ENCODE measurements at regions of chrX and their contacts with region 1.

Region 1: DNA sequence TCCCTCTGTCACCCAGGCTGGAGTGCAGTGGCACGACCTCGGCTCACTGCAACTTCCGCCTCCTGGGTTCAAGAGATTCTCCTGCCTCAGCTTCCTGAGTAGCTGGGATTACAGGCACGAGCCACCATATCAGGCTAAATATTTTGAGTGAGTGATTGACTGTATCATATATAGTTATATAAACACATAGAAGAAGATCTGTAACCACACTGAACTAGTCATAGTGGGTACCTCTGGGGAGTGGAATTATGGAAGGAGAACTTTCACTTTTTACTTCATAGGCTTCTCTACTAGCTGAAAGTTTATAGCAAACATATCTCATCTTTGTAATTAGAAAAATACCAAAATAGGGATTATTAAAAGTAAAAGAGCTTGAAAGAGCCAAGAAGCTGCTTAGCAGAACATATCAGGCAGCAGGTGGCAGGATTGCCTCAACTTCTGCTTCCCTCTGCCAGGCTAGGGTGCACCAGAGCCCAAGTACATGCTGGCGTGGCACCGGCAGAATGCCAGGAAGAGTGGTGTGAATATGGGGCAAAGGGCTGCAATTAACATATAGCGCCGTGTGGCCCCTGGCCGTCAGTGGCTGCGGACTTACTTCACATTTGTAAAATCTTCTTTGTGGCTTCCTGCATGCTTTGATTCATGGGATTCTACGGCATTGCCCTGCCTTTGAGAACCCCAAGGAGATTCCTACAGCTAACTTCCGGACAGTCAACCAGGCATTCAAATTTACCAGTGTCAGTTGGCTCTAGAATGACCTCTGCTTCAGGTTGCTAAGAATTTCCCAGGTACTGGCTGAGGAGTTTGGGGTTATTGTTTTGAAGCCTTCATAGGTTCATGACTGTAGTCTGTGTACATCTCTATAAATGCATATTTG is 39.4 kb upstream of the CD40LG start:
- DNase-seq: peak; percentile 2
- H3K4me3 ChIP-seq: no peak overlapping the region
- H3K27ac ChIP-seq: no peak overlapping the region
- H3K4me1 ChIP-seq: no peaks in the 10 kb centered on the region
- H3K27me3 ChIP-seq: no peaks in the 10 kb centered on the region
- CTCF ChIP-seq: no peak
- POLR2A ChIP-seq: no peak

Region 2: DNA sequence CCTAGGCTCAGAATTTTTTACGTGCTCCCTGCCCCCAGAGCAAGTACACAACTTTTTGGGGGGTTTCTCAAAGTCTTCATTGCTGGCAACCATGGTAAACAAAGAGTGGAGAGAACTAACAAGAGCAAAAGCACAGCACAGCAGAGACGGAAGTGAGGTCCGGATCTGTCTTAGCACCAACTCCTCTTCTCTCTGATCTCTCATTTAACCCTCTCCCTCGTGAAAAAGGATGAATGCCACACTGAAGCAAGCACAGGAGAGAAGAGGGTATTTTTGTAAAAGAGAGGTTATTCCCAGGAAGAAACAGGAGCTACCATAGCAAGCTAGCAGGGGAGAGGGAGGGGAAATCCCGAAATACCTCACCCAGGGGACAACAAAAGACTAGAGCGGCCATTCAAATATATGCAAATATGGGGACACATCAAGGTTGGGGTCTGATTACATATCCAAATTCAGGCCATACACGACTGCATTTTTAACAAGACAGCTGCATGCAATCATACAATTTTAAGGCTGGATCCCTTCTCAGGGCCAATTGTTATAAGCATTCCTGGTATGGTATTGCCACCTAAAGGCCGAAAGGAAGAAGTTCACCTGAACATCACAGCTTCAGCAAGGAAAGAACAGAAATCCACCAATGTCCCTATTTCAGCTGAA is 86.0 kb after region 1 on chrX:
- CTCF ChIA-PET with region 1: interaction called, 17 read pairs
- POLR2A ChIA-PET with region 1: no interaction called
- dilution Hi-C with region 1: no loop called
- intact Hi-C with region 1: loop called (anchors 5 kb)
- DNase-seq: peak; percentile 19
- H3K4me3 ChIP-seq: no peak overlapping the region
- H3K27ac ChIP-seq: no peak overlapping the region
- H3K4me1 ChIP-seq: no peaks in the 10 kb centered on the region
- H3K27me3 ChIP-seq: no peaks in the 10 kb centered on the region
- CTCF ChIP-seq: peak; percentile 32 to 33
- POLR2A ChIP-seq: no peak

Region 3: GRCh38 chrX:136735601-136736000 is 127.1 kb after region 1 on chrX:
- CTCF ChIA-PET with region 1: no interaction called
- POLR2A ChIA-PET with region 1: no interaction called
- dilution Hi-C with region 1: no loop called
- intact Hi-C with region 1: no loop called
- DNase-seq: no peak
- H3K4me3 ChIP-seq: no peak overlapping the region
- H3K27ac ChIP-seq: no peak overlapping the region
- H3K4me1 ChIP-seq: no peaks in the 10 kb centered on the region
- H3K27me3 ChIP-seq: no peaks in the 10 kb centered on the region
- CTCF ChIP-seq: no peak
- POLR2A ChIP-seq: no peak

Region 4: DNA sequence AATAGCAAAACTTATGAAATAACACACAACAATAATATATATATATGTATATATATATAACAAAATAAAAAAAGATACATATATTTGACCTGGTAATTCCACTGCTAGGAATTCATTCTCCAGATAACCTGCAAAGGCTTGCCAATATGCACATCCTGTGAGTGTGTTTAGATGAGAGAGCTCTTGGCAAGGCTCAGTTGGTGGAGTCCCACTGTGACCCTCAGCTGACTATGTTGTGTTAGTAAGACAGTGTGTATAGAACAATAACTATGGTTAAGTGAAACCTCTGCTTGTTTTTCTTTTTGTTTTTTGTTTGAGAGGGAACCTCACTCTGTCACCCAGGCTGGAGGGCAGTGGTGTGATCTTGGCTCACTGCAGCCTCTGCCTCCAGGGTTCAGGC is 311.5 kb after region 1 on chrX:
- CTCF ChIA-PET with region 1: no interaction called
- POLR2A ChIA-PET with region 1: no interaction called
- dilution Hi-C with region 1: no loop called
- intact Hi-C with region 1: loop called (anchors 1 kb)
- DNase-seq: peak; percentile 50
- H3K4me3 ChIP-seq: no peak overlapping the region
- H3K27ac ChIP-seq: no peak overlapping the region
- H3K4me1 ChIP-seq: no peaks in the 10 kb centered on the region
- H3K27me3 ChIP-seq: no peaks in the 10 kb centered on the region
- CTCF ChIP-seq: no peak
- POLR2A ChIP-seq: no peak

Measured in endothelial cell of umbilical vein (primary cell).